HCT116 (cell line): ENCODE measurements at regions of chr6 and their contacts with region 1.

Region 1: DNA sequence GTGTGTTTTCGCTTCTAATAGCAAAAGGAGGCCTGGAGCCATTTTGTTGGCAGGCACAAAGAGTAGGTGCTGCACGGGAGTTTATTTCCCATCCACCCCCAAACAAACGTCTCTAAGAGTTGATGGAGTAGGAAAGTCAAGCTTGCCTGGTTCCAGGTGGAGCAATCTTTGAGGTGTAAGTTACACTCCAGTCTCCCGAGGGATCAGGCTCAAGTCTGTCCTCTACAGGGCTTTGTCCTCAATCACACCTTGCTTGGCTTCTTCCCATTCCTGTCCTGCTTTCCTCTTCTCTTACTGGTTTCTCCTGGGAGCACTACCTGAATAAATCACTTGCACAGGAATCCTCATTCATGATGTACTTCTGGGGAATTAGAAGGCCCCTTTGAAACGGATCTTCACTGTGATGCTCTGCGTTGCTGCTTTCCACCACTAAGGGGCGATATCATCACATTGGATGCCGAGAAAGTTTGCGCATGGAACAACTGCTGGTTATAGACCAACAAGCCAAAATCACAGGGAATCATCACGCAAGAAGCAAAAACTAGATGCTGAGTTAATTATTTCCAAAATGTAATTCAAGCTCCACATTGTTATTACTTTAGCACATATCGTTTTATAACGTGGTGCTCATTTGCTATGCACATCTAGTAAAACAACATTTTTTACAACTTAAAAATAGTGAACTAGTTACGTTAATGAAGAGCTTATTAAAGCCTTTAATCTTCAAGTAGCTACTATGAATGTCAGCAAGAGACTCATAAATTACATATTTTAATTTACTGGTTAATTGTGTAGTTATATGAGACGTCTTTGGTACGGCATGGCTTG is 156.8 kb downstream of the DNAH8 start:
- DNase-seq: peak; percentile 32
- ATAC-seq: peak; percentile 92
- H3K4me3 ChIP-seq: no peak overlapping the region
- H3K27ac ChIP-seq: no peak overlapping the region
- H3K4me1 ChIP-seq: no peaks in the 10 kb centered on the region
- H3K27me3 ChIP-seq: peaks cover 42% of the 10 kb centered on the region
- CTCF ChIP-seq: peak; percentile 81 to 98 (median 95)
- POLR2A ChIP-seq: no peak
- RAD21 ChIP-seq: peak; percentile 84

Region 2: GRCh38 chr6:38933432-38933831 is 61.5 kb after region 1 on chr6:
- CTCF ChIA-PET with region 1: interaction called, 12 read pairs
- POLR2A ChIA-PET with region 1: no interaction called
- RAD21 ChIA-PET with region 1: interaction called in 1 of 2 experiments, 3 read pairs
- intact Hi-C with region 1: loop called (anchors 5 kb)
- DNase-seq: peak; percentile 22
- ATAC-seq: peak; percentile 97
- H3K4me3 ChIP-seq: no peak overlapping the region
- H3K27ac ChIP-seq: no peak overlapping the region
- H3K4me1 ChIP-seq: no peaks in the 10 kb centered on the region
- H3K27me3 ChIP-seq: peaks cover 59% of the 10 kb centered on the region
- CTCF ChIP-seq: peak; percentile 34 to 52 (median 36); a peak in 5 of 6 replicates
- POLR2A ChIP-seq: no peak
- RAD21 ChIP-seq: peak; percentile 62

Region 3: DNA sequence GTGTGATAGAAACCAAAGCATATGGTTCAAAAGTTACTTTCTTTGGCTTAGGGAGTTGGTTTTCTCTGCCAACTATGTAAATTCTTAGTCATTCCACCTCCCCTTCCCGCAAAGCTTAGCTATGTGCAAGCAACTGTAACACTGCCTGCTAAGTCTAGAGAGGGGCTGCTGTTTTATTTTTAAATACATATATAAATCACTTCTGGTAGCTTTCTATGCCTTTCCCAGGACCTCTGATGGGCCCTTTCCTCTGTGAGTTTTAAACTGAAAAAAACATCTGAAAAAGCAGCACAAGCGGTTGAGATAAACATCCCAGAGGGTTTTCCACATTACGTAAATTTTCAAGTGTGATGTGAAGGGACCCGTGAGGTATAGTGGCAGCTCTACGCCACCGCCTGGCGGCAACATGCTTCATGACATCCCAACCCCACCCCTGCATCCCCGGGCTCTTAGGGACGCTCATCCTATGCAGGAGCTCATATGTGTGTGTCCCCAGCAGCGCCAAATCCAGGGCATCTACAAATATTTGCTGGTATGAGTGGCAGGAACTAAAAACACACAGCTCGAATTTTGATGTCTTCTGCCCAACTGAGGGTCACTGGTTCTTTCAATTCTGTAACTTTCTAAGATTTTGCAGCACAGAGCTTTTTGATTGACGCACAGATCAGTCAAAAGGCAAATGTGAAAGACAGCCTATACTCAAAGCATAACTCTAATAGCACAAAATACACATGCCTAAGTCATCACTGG is 230.3 kb after region 1 on chr6:
- CTCF ChIA-PET with region 1: interaction called, 6 read pairs
- POLR2A ChIA-PET with region 1: no interaction called
- RAD21 ChIA-PET with region 1: no interaction called
- intact Hi-C with region 1: loop called (anchors 2 kb)
- DNase-seq: no peak
- ATAC-seq: peak; percentile 93
- H3K4me3 ChIP-seq: no peak overlapping the region
- H3K27ac ChIP-seq: no peak overlapping the region
- H3K4me1 ChIP-seq: no peaks in the 10 kb centered on the region
- H3K27me3 ChIP-seq: peaks cover 19% of the 10 kb centered on the region
- CTCF ChIP-seq: peak; percentile 27 to 53 (median 47); a peak in 5 of 6 replicates
- POLR2A ChIP-seq: no peak
- RAD21 ChIP-seq: peak; percentile 42

Region 4: DNA sequence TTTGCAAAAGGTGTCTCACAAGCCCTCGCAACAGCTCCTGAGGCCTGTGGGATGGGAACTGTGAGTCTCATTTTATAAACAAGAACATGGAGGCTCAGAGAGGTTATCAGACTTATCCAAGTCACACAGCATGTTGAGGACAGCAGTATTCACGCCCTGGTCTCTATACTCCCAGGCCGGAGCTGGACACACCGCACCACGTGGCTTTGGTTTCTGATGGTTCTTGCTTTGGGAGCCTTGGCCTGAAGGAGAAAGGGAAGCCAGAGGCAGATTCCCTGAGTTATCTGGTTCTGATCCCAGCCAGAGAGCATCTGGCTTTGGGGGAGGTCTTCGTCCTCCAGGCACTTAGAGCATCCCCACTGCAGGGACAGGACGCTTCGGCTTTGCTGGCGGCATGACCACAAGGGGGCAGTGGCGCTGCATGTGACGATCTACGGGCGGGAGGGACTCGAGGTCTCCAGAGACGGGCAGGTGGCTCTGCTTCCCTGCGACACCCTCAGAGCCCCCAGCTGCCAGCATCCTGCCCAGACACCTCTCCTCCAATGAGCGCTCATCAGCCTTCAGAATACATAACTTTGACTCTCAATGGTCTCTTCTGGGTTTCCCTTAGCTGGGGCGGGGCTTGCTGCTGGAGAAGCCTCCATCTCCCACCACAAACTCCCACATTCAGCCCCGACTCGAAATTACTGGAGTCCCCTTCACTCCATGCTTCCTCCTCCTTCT is 294.4 kb after region 1 on chr6:
- CTCF ChIA-PET with region 1: no interaction called
- POLR2A ChIA-PET with region 1: no interaction called
- RAD21 ChIA-PET with region 1: no interaction called
- intact Hi-C with region 1: loop called (anchors 5 kb)
- DNase-seq: peak; percentile 52
- ATAC-seq: peak; percentile 99
- H3K4me3 ChIP-seq: no peak overlapping the region
- H3K27ac ChIP-seq: no peak overlapping the region
- H3K4me1 ChIP-seq: no peaks in the 10 kb centered on the region
- H3K27me3 ChIP-seq: no peaks in the 10 kb centered on the region
- CTCF ChIP-seq: peak; percentile 79 to 95 (median 89)
- POLR2A ChIP-seq: no peak
- RAD21 ChIP-seq: peak; percentile 96